ENCODE measurements at regions of chr1 and their contacts with region 1.

Region 1: DNA sequence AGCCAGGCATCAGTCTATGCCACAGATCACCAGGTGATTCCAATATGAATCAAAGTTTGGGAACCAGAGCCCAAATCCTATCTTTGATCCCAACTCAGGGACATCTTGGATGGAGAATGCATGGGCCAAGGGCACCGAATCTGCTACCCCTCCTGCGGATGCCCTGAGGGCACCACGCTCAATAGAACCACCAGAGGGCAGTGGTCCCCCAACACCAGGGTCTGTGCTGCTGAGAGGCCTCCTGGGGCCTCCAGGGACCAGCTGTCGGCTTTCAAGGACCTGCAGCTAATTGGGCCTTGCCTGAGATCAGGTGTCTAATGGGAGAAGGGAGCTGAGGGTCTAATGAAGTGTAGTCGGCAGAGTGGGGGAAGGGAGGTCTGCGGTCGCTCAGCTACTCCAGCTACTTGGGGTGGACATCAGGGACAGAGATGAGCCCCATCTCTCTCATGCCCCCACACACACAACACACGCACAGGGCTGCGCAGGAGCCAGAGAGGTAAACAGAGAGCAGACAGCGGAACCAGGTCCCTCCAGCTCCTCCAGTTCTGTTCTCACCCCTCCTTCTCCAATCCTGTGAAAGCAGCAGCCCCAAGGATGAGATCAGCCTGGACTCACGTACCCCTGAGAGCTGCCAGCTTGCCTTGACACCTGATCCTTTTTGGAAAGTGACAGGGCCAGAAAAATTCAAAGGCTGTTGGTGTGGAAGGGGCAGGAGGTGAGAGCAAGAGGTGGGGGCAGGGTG is 34.9 kb upstream of the PPP1R15B start:
- DNase-seq: no peak
- H3K4me3 ChIP-seq: no peak overlapping the region
- H3K27ac ChIP-seq: peak overlapping the region; percentile 5 to 53 (median 22)
- H3K4me1 ChIP-seq: peaks cover 40 to 100% (median 42%) of the 10 kb centered on the region in 3 donors
- H3K27me3 ChIP-seq: no peaks in the 10 kb centered on the region
- CTCF ChIP-seq: peak; percentile 59 to 77 (median 64)
- POLR2A ChIP-seq: no peak

Region 2: DNA sequence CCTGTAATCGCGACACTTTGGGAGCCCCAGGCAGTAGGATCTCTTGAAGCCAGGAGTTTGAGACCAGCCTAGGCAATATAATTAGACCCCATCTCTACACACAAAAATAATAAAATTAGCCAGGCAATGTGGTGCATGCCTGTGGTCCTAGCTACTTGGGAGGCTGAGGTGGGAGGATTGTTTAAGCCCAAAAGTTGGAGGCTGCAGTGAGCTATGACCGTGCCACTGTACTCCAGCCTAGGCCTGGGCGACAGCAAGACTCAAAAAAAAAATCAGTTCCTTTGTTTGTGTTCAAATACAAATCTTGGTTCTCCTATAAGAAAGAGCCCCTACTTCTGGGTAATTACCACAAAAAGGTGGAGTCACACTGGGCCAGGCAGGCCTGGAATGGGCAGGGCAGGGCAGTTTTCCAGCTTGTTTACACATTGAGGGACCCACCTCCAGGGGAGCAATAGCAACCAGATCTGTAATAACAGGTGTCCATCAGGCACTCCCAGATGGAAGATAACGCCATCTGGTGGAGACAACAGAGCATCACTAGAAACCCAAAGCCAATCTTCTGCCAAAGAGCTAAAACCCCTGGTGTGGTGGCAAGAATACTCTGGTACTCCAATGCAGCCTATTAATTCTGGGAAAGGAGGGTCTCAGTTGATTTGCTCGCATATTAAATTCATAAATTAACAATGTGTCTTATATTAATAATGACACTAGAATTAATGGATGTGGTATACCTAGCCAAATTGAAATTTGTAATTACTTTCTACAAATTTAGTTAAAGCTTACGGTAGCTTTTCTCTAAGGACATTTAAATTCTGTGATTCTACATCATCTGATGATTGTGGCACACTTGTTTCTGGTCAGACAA is 48.1 kb before region 1 on chr1:
- intact Hi-C with region 1: no loop called
- DNase-seq: no peak
- H3K4me3 ChIP-seq: no peak overlapping the region
- H3K27ac ChIP-seq: peak overlapping the region in 2 of 4 donors; percentile 28 to 49
- H3K4me1 ChIP-seq: peaks cover 0 to 4% (median 3%) of the 10 kb centered on the region in 3 donors
- H3K27me3 ChIP-seq: no peaks in the 10 kb centered on the region
- CTCF ChIP-seq: peak; percentile 72 to 88 (median 78)
- POLR2A ChIP-seq: no peak

Region 3: GRCh38 chr1:204480515-204480914 is 34.0 kb after region 1 on chr1:
- intact Hi-C with region 1: no loop called
- DNase-seq: no peak
- H3K4me3 ChIP-seq: no peak overlapping the region
- H3K27ac ChIP-seq: peak overlapping the region in 3 of 4 donors; percentile 41 to 51 (median 44)
- H3K4me1 ChIP-seq: peaks cover 41 to 92% (median 69%) of the 10 kb centered on the region in 3 donors
- H3K27me3 ChIP-seq: no peaks in the 10 kb centered on the region
- CTCF ChIP-seq: no peak
- POLR2A ChIP-seq: no peak

Region 4: GRCh38 chr1:204494281-204495077 is 47.9 kb after region 1 on chr1 and contains the start of gene PIK3C2B:
- intact Hi-C with region 1: loop called (anchors 5 kb)
- DNase-seq: no peak
- H3K4me3 ChIP-seq: peak within 1 kb of the TSS; percentile 65 to 75 (median 72)
- H3K27ac ChIP-seq: peak within 1 kb of the TSS; percentile 83 to 95 (median 90)
- H3K4me1 ChIP-seq: peaks cover 17 to 55% (median 24%) of the 10 kb centered on the region in 3 donors
- H3K27me3 ChIP-seq: no peaks in the 10 kb centered on the region
- CTCF ChIP-seq: peak; percentile 6 to 79 (median 55)
- POLR2A ChIP-seq: peak in 2 of 4 donors; percentile 65 to 81
- total RNA-seq, gene PIK3C2B: 19.4 to 40.2 (median 21.3) TPM